Endothelial cell of umbilical vein (primary cell): ENCODE measurements at regions of chr9 and their contacts with region 1.

Region 1: GRCh38 chr9:87342743-87343142 is 154.9 kb upstream of the DAPK1 start:
- DNase-seq: no peak
- H3K4me3 ChIP-seq: no peak overlapping the region
- H3K27ac ChIP-seq: no peak overlapping the region
- H3K4me1 ChIP-seq: no peaks in the 10 kb centered on the region
- H3K27me3 ChIP-seq: peaks cover 9 to 16% of the 10 kb centered on the region in 2 experiments
- CTCF ChIP-seq: no peak
- POLR2A ChIP-seq: no peak

Region 2: DNA sequence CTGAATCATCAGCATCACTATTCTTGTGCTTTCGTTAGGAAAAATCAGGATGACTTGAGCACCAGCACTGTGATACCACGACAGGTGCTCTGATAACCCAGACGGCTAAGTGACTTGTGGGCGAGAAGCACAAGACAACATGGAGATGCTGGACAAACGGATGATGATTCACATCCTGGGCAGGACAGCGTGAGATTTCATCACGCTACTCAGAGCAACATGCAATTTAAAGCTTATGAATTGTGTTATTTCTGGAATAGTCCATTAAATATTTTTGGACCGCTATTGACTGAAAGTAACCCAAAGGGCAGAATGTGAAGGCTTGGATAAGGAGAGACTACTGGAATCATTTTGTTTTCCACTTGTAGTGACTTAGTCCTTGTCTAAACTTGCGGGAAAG is 40.2 kb after region 1 on chr9:
- CTCF ChIA-PET with region 1: no interaction called
- POLR2A ChIA-PET with region 1: no interaction called
- dilution Hi-C with region 1: no loop called
- intact Hi-C with region 1: no loop called
- DNase-seq: no peak
- H3K4me3 ChIP-seq: no peak overlapping the region
- H3K27ac ChIP-seq: no peak overlapping the region
- H3K4me1 ChIP-seq: no peaks in the 10 kb centered on the region
- H3K27me3 ChIP-seq: no peaks in the 10 kb centered on the region
- CTCF ChIP-seq: no peak
- POLR2A ChIP-seq: no peak

Region 3: DNA sequence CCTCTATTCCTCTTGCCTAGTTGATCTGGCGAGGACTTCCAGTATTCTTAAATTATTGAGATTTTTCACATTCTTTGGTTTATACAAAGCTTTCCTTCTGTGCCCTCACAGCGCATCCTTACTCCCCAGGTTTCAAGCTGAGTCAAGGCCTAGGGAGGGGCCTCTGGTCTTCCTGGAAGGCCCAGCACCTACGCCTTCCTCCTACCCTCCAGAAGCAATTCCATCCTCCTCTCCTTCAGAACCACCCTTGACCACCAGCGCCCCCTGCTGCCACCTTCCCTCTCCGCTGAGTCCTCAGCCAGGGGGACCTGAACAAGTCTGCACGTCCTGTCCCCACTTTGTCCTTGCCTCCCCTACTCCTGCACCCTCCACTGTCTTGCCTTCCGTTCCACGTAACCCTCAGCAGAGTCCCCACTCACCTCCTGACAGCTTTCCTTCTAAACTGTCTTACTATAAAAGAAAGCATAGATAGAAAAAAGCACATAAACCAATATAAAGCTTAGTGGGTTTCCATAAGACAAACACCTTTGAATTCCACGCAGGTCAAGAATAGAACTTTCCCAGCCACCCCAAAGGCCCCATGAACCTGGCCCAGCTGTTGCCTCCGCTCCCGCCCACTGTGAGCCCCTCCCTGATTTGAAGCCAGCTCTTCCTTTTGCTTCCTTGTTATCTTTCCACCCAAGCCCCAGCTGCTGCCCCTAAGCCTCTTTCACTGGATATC is 320.2 kb after region 1 on chr9:
- CTCF ChIA-PET with region 1: interaction called, 101 read pairs
- POLR2A ChIA-PET with region 1: no interaction called
- dilution Hi-C with region 1: loop called (anchors 10 kb)
- intact Hi-C with region 1: loop called (anchors 1 kb)
- DNase-seq: peak; percentile 74
- H3K4me3 ChIP-seq: no peak overlapping the region
- H3K27ac ChIP-seq: no peak overlapping the region
- H3K4me1 ChIP-seq: no peaks in the 10 kb centered on the region
- H3K27me3 ChIP-seq: no peaks in the 10 kb centered on the region
- CTCF ChIP-seq: peak; percentile 80 to 87
- POLR2A ChIP-seq: no peak